Activated CD4-positive, alpha-beta T cell treated with anti-CD3 and anti-CD28 coated beads, Interleukin-2, amount 10 ng/mL, durations not matched to agents 24 days and 14 days (primary cell): ENCODE measurements at regions of chr18 and their contacts with region 1.

Region 1: GRCh38 chr18:31685097-31686082 is 1.0 kb upstream of the B4GALT6 start:
- DNase-seq: peak; percentile 85
- H3K4me3 Mint-ChIP-seq: peak overlapping the region; percentile 81
- H3K27ac Mint-ChIP-seq: peak overlapping the region; percentile 40
- H3K4me1 Mint-ChIP-seq: peaks cover 12% of the 10 kb centered on the region
- H3K27me3 Mint-ChIP-seq: peaks cover 51% of the 10 kb centered on the region

Region 2: GRCh38 chr18:31454066-31454708 is 231.2 kb before region 1 on chr18:
- intact Hi-C with region 1: no loop called
- DNase-seq: no peak
- H3K4me3 Mint-ChIP-seq: no peak overlapping the region
- H3K27ac Mint-ChIP-seq: no peak overlapping the region
- H3K4me1 Mint-ChIP-seq: no peaks in the 10 kb centered on the region
- H3K27me3 Mint-ChIP-seq: no peaks in the 10 kb centered on the region

Region 3: DNA sequence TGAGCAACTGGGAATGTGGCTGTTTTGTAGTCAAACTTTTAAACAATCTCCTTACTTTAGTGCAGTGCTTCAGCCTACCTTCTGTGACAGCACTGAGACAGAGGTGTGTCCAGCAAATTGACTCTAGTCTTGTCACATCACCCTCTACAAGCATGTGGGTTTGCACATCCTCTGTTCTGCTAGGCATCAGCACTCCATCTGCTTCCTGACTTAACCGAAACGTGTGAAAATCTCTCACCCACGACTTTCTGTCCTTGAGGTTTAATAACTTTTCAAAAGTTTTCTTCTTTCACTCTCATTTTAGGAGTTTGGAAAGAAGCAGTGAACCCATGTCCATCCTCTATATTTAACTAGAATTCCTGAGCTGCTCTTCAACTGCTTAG is 51.1 kb before region 1 on chr18:
- intact Hi-C with region 1: loop called (anchors 10 kb)
- DNase-seq: peak; percentile 63
- H3K4me3 Mint-ChIP-seq: no peak overlapping the region
- H3K27ac Mint-ChIP-seq: no peak overlapping the region
- H3K4me1 Mint-ChIP-seq: peaks cover 17% of the 10 kb centered on the region
- H3K27me3 Mint-ChIP-seq: peaks cover 7% of the 10 kb centered on the region

Region 4: GRCh38 chr18:31658670-31659575 is 26.5 kb before region 1 on chr18:
- intact Hi-C with region 1: loop called (anchors 2 kb)
- DNase-seq: peak; percentile 73
- H3K4me3 Mint-ChIP-seq: peak overlapping the region; percentile 50
- H3K27ac Mint-ChIP-seq: peak overlapping the region; percentile 63
- H3K4me1 Mint-ChIP-seq: peaks cover 13% of the 10 kb centered on the region
- H3K27me3 Mint-ChIP-seq: peaks cover 4% of the 10 kb centered on the region